GM12878 (cell line): ENCODE measurements at regions of chr1 and their contacts with region 1.

Region 1: DNA sequence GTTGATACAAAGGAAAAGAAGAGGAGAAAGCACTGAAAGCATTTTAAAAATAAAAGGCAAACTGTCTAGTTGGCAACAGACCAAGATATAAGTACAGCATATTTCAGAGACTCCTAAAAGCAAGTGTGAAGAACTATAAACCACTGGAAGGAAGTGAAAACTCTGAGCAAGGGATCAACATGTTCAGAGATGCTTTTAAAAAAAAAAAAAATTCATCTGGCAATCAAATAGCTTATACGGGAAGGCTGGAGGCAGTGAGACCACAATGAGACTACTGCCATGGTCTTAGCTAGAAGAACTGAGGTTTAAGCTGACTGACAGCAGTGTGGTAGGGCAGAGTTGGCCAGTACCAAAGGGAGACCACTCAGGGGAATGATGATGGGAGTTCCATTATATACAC is 124.3 kb downstream of the VAV3 start:
- DNase-seq: no peak
- ATAC-seq: peak; percentile 68
- H3K4me3 ChIP-seq: no peak overlapping the region
- H3K27ac ChIP-seq: no peak overlapping the region
- H3K4me1 ChIP-seq: peaks cover 14% of the 10 kb centered on the region
- H3K27me3 ChIP-seq: no peaks in the 10 kb centered on the region
- CTCF ChIP-seq: no peak
- EP300 ChIP-seq: no peak
- POLR2A ChIP-seq: no peak
- RAD21 ChIP-seq: no peak

Region 2: DNA sequence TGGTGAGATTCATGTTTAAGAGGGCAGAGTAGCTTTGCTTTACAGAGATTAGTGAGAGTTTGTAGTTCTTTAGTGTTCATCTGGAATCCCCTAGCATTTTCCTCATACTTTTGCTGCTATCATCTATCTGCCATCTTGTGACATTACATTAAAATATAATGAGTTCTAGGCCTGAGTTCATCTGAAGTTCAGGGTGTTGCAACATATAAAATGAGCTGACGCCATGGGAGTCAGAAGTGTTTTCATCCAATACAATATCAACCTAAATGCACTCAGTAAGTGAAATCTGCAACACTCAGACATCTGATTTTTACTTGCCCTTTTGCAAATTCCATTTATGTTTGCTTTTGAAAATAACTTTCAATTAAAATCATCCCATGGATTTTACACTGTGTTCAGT is 546.0 kb before region 1 on chr1:
- CTCF ChIA-PET with region 1: no interaction called
- POLR2A ChIA-PET with region 1: no interaction called
- RAD21 ChIA-PET with region 1: no interaction called
- SMC1A ChIA-PET with region 1: no interaction called
- in situ Hi-C with region 1: no loop called
- intact Hi-C with region 1: loop called (anchors 10 kb)
- DNase-seq: no peak
- ATAC-seq: no peak
- H3K4me3 ChIP-seq: no peak overlapping the region
- H3K27ac ChIP-seq: no peak overlapping the region
- H3K4me1 ChIP-seq: no peaks in the 10 kb centered on the region
- H3K27me3 ChIP-seq: no peaks in the 10 kb centered on the region; a peak in 1 of 4 replicates
- CTCF ChIP-seq: no peak
- EP300 ChIP-seq: no peak
- POLR2A ChIP-seq: no peak
- RAD21 ChIP-seq: no peak